Calu3 (cell line): ENCODE measurements at regions of chr1 and their contacts with region 1.

Region 1: GRCh38 chr1:176374967-176375569 is 87.9 kb upstream of the PAPPA2 start:
- DNase-seq: peak; percentile 89
- H3K4me3 Mint-ChIP-seq: no peak overlapping the region
- H3K27ac Mint-ChIP-seq: no peak overlapping the region
- H3K4me1 Mint-ChIP-seq: no peaks in the 10 kb centered on the region
- H3K27me3 Mint-ChIP-seq: peaks cover 34% of the 10 kb centered on the region
- CTCF ChIP-seq: peak; percentile 82

Region 2: DNA sequence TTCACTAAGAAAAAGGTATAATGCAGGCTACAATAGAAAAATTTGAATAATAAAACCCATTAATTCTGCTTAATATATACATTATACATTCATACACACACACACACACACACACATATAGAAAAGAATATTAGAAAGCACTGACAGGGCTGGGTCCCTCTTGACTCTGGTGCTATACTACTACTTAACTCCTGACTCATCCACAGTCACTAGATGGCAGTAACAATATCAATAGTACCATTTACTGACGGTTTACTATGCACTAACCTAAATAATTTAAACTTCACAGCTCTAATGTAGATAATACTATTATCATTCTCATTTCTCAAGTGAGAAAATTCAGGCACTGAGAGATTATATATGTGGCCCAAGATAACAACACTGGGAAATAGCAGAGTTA is 255.5 kb before region 1 on chr1:
- CTCF ChIA-PET with region 1: no interaction called
- intact Hi-C with region 1: loop called (anchors 10 kb)
- DNase-seq: peak; percentile 4
- H3K4me3 Mint-ChIP-seq: no peak overlapping the region
- H3K27ac Mint-ChIP-seq: no peak overlapping the region
- H3K4me1 Mint-ChIP-seq: no peaks in the 10 kb centered on the region
- H3K27me3 Mint-ChIP-seq: no peaks in the 10 kb centered on the region
- CTCF ChIP-seq: peak; percentile 24

Region 3: GRCh38 chr1:176263278-176263677 is 111.8 kb before region 1 on chr1:
- CTCF ChIA-PET with region 1: no interaction called
- intact Hi-C with region 1: no loop called
- DNase-seq: no peak
- H3K4me3 Mint-ChIP-seq: no peak overlapping the region
- H3K27ac Mint-ChIP-seq: no peak overlapping the region
- H3K4me1 Mint-ChIP-seq: no peaks in the 10 kb centered on the region
- H3K27me3 Mint-ChIP-seq: no peaks in the 10 kb centered on the region
- CTCF ChIP-seq: no peak

Region 4: GRCh38 chr1:176466514-176467220 is 91.6 kb after region 1 on chr1:
- CTCF ChIA-PET with region 1: interaction called, 3 read pairs
- intact Hi-C with region 1: loop called (anchors 1 kb)
- DNase-seq: peak; percentile 43
- H3K4me3 Mint-ChIP-seq: no peak overlapping the region
- H3K27ac Mint-ChIP-seq: no peak overlapping the region
- H3K4me1 Mint-ChIP-seq: no peaks in the 10 kb centered on the region
- H3K27me3 Mint-ChIP-seq: peaks cover 46% of the 10 kb centered on the region
- CTCF ChIP-seq: peak; percentile 64

Region 5: DNA sequence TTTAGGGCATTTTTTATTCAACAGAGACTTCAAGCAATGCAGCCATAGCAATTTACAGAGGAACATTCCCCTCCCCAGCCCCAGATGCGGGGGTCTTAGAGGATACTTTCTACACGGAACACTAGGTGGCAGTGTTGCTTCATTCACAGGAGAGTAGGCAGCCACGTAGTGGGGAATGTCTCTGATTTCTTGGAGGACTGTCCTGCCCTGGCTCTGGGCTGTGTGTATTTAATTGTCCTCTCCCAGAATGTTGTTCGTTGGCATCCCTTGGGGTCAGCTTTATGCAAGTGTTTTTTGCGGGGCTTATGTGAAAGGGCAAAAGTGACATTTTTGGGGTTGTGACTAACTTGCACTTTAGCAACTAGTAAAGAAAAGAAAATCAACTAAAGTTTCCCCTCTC is 184.8 kb after region 1 on chr1:
- CTCF ChIA-PET with region 1: no interaction called
- intact Hi-C with region 1: loop called (anchors 5 kb)
- DNase-seq: peak; percentile 64
- H3K4me3 Mint-ChIP-seq: no peak overlapping the region
- H3K27ac Mint-ChIP-seq: no peak overlapping the region
- H3K4me1 Mint-ChIP-seq: no peaks in the 10 kb centered on the region
- H3K27me3 Mint-ChIP-seq: peaks cover 43% of the 10 kb centered on the region
- CTCF ChIP-seq: peak; percentile 91

Region 6: DNA sequence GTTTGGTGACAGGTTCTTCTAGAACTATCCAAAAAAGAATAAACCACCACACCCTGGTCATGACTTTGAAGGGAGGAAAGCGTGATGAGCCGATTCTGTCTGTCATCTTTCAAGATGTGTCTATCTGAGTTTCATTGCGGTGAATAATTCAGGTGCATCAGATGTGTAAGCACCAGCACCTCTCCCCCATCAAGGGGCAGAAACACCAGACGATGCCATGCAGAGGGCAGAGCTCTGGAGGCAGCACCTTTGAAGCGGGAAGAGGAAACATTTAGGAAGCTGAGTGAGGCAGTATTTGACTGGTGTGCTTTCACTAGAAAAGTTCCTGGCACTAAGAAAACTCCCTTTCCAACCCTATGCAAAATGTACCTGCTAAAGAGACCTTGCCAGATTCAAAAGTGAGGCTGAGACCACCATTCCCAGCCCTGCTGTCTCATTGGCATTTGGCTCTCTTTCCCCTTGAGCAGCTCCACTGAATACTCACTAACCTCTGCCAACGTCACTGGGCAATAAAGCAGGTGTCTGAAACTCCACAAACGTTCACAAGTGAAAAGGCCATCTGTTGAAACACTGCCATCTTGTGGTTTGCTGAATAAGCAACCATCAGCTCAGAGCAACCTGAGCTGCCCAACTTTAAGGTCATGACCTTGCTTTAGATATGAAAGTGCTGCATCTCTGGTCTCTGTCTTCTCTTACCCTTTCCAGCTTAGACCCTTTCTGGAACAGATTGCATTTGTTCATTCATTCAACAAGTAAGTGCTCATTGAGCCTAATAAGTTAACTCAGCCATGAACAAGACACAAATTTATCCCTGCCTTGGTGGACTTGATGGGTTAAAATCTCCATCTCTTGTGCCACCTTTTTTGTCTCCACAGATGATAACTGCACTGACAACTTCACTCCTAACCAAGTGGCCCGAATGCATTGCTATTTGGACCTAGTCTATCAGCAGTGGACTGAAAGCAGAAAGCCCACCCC is 316.5 kb after region 1 on chr1:
- CTCF ChIA-PET with region 1: interaction called, 11 read pairs
- intact Hi-C with region 1: loop called (anchors 1 kb)
- DNase-seq: peak; percentile 40
- H3K4me3 Mint-ChIP-seq: no peak overlapping the region
- H3K27ac Mint-ChIP-seq: no peak overlapping the region
- H3K4me1 Mint-ChIP-seq: no peaks in the 10 kb centered on the region
- H3K27me3 Mint-ChIP-seq: peaks cover 46% of the 10 kb centered on the region
- CTCF ChIP-seq: peak; percentile 53

Region 7: GRCh38 chr1:176843352-176844297 is 468.6 kb after region 1 on chr1:
- CTCF ChIA-PET with region 1: no interaction called
- intact Hi-C with region 1: loop called (anchors 1 kb)
- DNase-seq: peak; percentile 32
- H3K4me3 Mint-ChIP-seq: no peak overlapping the region
- H3K27ac Mint-ChIP-seq: no peak overlapping the region
- H3K4me1 Mint-ChIP-seq: no peaks in the 10 kb centered on the region
- H3K27me3 Mint-ChIP-seq: peaks cover 79% of the 10 kb centered on the region
- CTCF ChIP-seq: no peak

Region 8: DNA sequence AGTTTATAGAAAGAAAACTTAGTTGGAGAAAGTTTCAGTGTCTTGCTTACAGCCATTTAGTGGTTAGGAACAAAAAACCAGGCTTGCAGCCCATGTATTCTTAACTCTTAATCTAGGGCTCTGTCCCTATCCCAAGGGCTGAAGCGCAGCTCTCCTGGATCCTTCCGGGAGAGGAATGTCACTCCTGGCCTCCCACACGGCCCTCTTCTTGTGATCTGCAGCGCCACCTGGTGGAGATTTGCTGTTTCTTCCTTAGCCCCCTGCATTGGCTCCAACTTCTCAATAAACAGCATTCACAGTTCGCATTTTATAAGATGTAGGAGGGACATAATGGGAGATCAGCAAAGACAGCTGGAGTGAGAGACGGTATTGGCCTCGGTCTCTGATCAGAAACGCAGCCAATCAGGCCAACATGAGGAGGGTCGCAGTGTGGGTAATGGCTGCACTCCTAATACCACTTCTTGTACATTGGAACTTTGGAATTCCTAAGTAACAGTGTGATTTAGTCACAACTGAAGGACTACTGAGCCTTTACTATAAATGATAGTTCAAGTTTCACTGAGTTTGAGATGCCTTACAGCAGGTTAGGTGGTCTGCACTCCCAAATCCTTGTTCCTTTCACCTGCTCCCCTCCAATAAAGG is 506.0 kb after region 1 on chr1:
- CTCF ChIA-PET with region 1: interaction called, 3 read pairs
- intact Hi-C with region 1: loop called (anchors 1 kb)
- DNase-seq: peak; percentile 81
- H3K4me3 Mint-ChIP-seq: no peak overlapping the region
- H3K27ac Mint-ChIP-seq: no peak overlapping the region
- H3K4me1 Mint-ChIP-seq: no peaks in the 10 kb centered on the region
- H3K27me3 Mint-ChIP-seq: peaks cover 52% of the 10 kb centered on the region
- CTCF ChIP-seq: peak; percentile 93